ENCODE measurements at regions of chr13 and their contacts with region 1.

Region 1: GRCh38 chr13:78978381-78978998 is 319.5 kb upstream of the OBI1 start:
- DNase-seq: peak; percentile 62
- H3K4me3 ChIP-seq: no peak overlapping the region
- CTCF ChIP-seq: peak; percentile 62

Region 2: GRCh38 chr13:78137404-78138142 is 840.9 kb before region 1 on chr13:
- in situ Hi-C with region 1: loop called (anchors 25 kb)
- DNase-seq: peak; percentile 57
- H3K4me3 ChIP-seq: no peak overlapping the region
- CTCF ChIP-seq: peak; percentile 74